ENCODE measurements at regions of chr6 and their contacts with region 1.

Region 1: GRCh38 chr6:6918216-6918983 is 189.4 kb upstream of the RREB1 start:
- DNase-seq: peak; percentile 91
- H3K4me3 Mint-ChIP-seq: no peak overlapping the region
- H3K27ac Mint-ChIP-seq: no peak overlapping the region
- H3K4me1 Mint-ChIP-seq: peaks cover 30% of the 10 kb centered on the region
- H3K27me3 Mint-ChIP-seq: peaks cover 20% of the 10 kb centered on the region

Region 2: DNA sequence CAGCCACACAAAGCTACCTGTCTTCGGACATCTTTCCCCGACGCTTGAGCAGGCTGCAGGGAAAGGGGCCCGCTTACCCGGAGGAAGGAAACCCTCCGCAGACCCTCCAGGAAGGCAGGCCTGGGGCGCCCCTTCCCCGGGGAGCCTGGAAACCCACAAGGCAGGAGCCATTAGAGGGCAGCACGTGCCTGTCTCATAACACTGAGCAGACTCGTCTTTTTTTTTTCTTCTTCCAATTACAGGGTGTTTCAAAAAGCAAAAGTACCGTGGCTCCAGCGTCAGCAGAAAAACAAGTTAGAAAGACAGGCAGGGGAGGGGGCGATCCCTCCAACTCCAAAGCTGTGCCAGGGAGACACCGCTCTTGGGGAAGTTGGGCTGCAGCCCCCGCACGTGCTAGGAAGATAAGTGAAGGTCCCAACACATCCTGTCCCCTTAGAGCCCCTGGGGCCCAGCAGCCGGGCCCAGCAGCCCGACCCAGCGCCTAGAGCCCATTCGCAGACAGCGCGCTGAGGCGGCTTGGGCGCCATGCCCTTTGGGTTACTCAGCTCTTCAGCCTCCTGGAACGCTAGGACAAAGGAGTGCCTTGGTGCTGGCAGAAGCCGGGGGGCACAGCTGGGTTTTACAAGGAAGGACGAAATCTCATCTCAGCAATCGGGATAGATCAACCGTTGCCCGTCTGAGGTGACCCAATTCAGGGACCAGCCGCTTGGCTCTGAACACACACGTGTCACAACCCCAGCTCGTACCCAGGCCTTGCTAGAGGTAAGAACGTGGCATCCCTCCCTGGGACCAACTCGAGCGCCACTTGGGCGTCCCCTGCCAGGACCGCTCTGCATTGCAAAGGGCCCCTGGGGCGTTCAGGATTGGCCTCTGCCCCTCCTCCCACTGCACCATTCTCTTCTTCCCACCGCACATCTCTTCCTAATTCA is 193.6 kb before region 1 on chr6:
- CTCF ChIA-PET with region 1: interaction called, 3 read pairs
- intact Hi-C with region 1: loop called (anchors 5 kb)
- DNase-seq: peak; percentile 82
- H3K4me3 Mint-ChIP-seq: peak overlapping the region; percentile 34
- H3K27ac Mint-ChIP-seq: no peak overlapping the region
- H3K4me1 Mint-ChIP-seq: peaks cover 4% of the 10 kb centered on the region
- H3K27me3 Mint-ChIP-seq: no peaks in the 10 kb centered on the region

Region 3: GRCh38 chr6:6856538-6857523 is 61.6 kb before region 1 on chr6:
- CTCF ChIA-PET with region 1: no interaction called
- intact Hi-C with region 1: loop called (anchors 1 kb)
- DNase-seq: peak; percentile 87
- H3K4me3 Mint-ChIP-seq: peak overlapping the region; percentile 53
- H3K27ac Mint-ChIP-seq: peak overlapping the region; percentile 80
- H3K4me1 Mint-ChIP-seq: peaks cover 20% of the 10 kb centered on the region
- H3K27me3 Mint-ChIP-seq: no peaks in the 10 kb centered on the region

Region 4: DNA sequence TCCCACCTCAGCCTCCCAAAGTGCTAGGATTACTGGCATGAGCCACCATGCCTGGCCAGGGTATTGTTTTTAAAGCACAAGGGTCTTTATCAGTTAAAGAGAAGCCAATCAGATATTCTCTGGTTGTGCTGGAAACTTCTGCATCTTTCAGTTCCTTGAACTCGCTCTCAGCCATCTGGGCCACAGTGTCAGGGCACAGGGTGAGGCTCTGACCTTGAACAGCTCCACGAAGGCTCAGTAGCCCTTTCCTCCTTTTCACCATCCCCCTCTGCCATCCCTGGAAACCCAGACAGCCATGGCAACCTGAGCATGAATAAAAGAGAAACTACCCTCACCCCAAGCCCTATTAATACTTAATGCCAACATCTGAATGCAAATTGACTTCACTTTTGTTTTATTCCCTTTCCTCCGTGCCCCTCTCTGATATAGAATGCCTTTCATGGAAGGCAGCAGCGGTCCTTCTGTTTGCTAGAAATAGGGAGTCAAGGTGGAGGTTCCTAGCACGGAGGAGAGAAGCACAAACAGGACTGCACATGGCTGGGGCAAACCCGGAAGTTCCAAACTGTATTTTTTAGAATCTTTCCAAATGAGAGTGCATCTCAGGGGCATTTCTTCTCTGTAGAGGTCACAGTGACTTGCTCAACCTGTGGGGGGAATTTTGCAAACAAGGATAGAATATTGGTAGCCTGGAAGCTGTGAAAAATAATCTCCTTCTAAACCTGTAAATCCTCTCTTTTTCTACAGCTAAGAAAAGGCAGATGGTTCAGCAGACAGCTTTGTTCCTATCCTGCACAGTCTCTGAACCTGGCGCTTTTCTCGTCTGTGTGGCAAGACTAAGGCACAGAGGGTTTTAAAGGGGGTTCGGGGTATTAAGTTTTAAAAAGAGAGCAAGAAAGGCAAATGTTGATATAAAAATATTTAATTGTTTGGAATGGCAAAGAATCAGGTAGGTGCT is 12.9 kb after region 1 on chr6:
- CTCF ChIA-PET with region 1: no interaction called
- intact Hi-C with region 1: no loop called
- DNase-seq: no peak
- H3K4me3 Mint-ChIP-seq: no peak overlapping the region
- H3K27ac Mint-ChIP-seq: no peak overlapping the region
- H3K4me1 Mint-ChIP-seq: no peaks in the 10 kb centered on the region
- H3K27me3 Mint-ChIP-seq: peaks cover 11% of the 10 kb centered on the region

Region 5: DNA sequence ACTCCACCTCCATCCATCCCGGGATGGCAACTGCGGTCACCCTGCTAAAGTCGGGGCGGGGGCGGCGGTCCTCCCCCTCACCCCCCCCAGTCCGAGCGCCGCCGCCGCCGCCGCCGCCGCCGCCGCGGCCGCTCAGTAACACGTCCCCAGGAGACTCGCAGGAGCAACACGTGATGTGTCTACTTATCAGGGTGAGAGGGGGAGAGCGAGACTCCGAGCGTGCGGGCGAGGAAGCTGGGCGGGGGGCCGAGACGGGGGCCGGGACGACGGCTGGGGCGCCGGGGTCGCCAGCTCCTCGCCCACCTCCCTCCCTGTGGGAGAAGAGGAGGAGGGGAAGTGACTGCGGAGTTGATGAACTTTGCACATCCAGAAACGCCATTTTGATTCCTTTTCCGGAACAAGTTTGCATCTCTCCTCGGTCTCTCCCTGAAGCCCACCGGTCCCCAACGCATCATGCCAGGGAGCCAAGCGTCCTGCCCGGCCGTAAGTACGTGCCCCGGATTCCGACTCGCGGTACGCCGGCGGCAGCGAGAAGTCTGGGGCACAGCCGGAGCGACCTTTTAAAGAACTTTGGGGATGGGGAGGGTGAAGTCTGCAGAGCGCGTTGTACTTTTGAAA is 189.3 kb after region 1 on chr6 and contains the start of gene RREB1:
- CTCF ChIA-PET with region 1: no interaction called
- intact Hi-C with region 1: loop called (anchors 5 kb)
- DNase-seq: peak; percentile 60
- H3K4me3 Mint-ChIP-seq: peak within 1 kb of the TSS; percentile 90
- H3K27ac Mint-ChIP-seq: peak within 1 kb of the TSS; percentile 93
- H3K4me1 Mint-ChIP-seq: peaks cover 35% of the 10 kb centered on the region
- H3K27me3 Mint-ChIP-seq: no peaks in the 10 kb centered on the region
- total RNA-seq, gene RREB1: 10.8 to 12.2 TPM

Region 6: GRCh38 chr6:7238900-7239589 is 320.6 kb after region 1 on chr6:
- CTCF ChIA-PET with region 1: no interaction called
- intact Hi-C with region 1: loop called (anchors 5 kb)
- DNase-seq: peak; percentile 93
- H3K4me3 Mint-ChIP-seq: no peak overlapping the region
- H3K27ac Mint-ChIP-seq: peak overlapping the region; percentile 15
- H3K4me1 Mint-ChIP-seq: peaks cover 27% of the 10 kb centered on the region
- H3K27me3 Mint-ChIP-seq: no peaks in the 10 kb centered on the region

Measured in activated naive CD4-positive, alpha-beta T cell treated with anti-CD3 and anti-CD28 coated beads for 36 hours (primary cell).